Activated CD4-positive, alpha-beta T cell treated with anti-CD3 and anti-CD28 coated beads for 36 hours (primary cell): ENCODE measurements at regions of chr10 and their contacts with region 1.

Region 1: GRCh38 chr10:73076360-73077183 is 20.1 kb downstream of the P4HA1 start:
- DNase-seq: peak; percentile 16
- ATAC-seq: peak; percentile 84
- H3K4me3 Mint-ChIP-seq: no peak overlapping the region
- H3K27ac Mint-ChIP-seq: peak overlapping the region; percentile 77
- H3K4me1 Mint-ChIP-seq: peaks cover 25% of the 10 kb centered on the region
- H3K27me3 Mint-ChIP-seq: no peaks in the 10 kb centered on the region

Region 2: GRCh38 chr10:73060738-73061635 is 15.6 kb before region 1 on chr10:
- CTCF ChIA-PET with region 1: interaction called, 11 read pairs
- POLR2A ChIA-PET with region 1: interaction called, 3 read pairs
- intact Hi-C with region 1: no loop called
- DNase-seq: no peak
- ATAC-seq: peak; percentile 81
- H3K4me3 Mint-ChIP-seq: no peak overlapping the region
- H3K27ac Mint-ChIP-seq: no peak overlapping the region
- H3K4me1 Mint-ChIP-seq: peaks cover 17% of the 10 kb centered on the region
- H3K27me3 Mint-ChIP-seq: no peaks in the 10 kb centered on the region

Region 3: GRCh38 chr10:73088304-73088703 is 11.7 kb after region 1 on chr10:
- CTCF ChIA-PET with region 1: no interaction called
- POLR2A ChIA-PET with region 1: no interaction called
- intact Hi-C with region 1: no loop called
- DNase-seq: no peak
- ATAC-seq: no peak
- H3K4me3 Mint-ChIP-seq: no peak overlapping the region
- H3K27ac Mint-ChIP-seq: no peak overlapping the region
- H3K4me1 Mint-ChIP-seq: peaks cover 16% of the 10 kb centered on the region
- H3K27me3 Mint-ChIP-seq: no peaks in the 10 kb centered on the region

Region 4: GRCh38 chr10:73448384-73448783 is 371.8 kb after region 1 on chr10:
- CTCF ChIA-PET with region 1: no interaction called
- POLR2A ChIA-PET with region 1: no interaction called
- intact Hi-C with region 1: no loop called
- DNase-seq: no peak
- ATAC-seq: no peak
- H3K4me3 Mint-ChIP-seq: no peak overlapping the region
- H3K27ac Mint-ChIP-seq: no peak overlapping the region
- H3K4me1 Mint-ChIP-seq: peaks cover 2% of the 10 kb centered on the region
- H3K27me3 Mint-ChIP-seq: no peaks in the 10 kb centered on the region